ENCODE measurements at regions of chr2 and their contacts with region 1.

Region 1: DNA sequence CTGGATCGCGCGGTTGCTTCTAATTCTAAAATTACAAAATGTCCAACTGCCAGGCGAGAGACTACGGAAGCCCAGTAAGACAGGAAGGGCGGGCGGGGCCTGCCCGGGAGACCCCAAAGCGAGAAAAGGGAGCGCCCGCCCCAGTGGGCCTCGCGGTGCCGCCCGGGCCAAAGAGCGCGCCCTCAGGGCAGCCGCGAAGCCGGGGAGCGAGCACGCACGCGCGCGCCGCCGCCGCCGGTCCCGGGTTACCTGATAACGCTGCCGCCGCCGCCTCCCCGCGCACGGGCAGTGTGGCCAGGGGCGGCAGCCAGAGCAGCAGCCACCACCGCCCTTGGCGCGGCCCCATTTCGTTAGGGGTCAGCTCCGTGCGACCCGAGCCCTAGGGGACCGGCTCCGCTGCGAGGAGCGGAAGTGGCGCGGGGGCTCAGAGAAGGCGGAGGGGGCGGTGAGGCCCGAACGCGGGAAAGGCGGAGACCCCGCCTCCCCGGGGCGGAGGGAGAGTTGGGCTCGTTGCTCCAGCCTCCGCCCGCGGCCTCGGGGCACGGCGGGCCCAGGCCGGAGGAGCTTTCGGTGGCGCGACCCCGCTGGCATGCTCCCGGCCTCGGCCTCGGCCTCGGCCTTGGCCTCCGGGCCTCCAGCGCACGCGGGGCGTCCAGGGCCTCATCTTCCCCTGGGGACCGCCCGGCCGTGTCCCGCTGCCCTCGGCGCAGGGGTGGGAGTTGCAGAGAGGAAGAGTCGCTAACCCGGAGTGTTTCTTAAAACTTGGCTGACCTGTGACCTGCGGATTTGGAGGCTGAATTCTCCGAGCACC is at the start of gene NEMP2:
- DNase-seq: no peak
- ATAC-seq: peak; percentile 80
- H3K4me3 ChIP-seq: peak within 1 kb of the TSS; percentile 88
- H3K27ac ChIP-seq: peak within 1 kb of the TSS; percentile 97
- H3K4me1 ChIP-seq: peaks cover 21% of the 10 kb centered on the region
- H3K27me3 ChIP-seq: no peaks in the 10 kb centered on the region
- CTCF ChIP-seq: no peak
- EP300 ChIP-seq: no peak
- POLR2A ChIP-seq: peak; percentile 94
- RAD21 ChIP-seq: no peak
- polyA plus RNA-seq, gene NEMP2: 2.3 to 3.6 TPM

Region 2: GRCh38 chr2:189783927-189784867 is 750.3 kb before region 1 on chr2 and contains the starts of genes ORMDL1 and PMS1:
- CTCF ChIA-PET with region 1: no interaction called
- POLR2A ChIA-PET with region 1: no interaction called
- RAD21 ChIA-PET with region 1: no interaction called
- SMC1A ChIA-PET with region 1: no interaction called
- in situ Hi-C with region 1: no loop called
- intact Hi-C with region 1: loop called (anchors 5 kb)
- DNase-seq: peak; percentile 86
- ATAC-seq: peak; percentile 95
- H3K4me3 ChIP-seq: peak within 1 kb of the TSS; percentile 86
- H3K27ac ChIP-seq: peak within 1 kb of the TSS; percentile 92
- H3K4me1 ChIP-seq: peaks cover 4% of the 10 kb centered on the region; the same call in 1 of the 2 replicates
- H3K27me3 ChIP-seq: no peaks in the 10 kb centered on the region
- CTCF ChIP-seq: no peak
- EP300 ChIP-seq: 0 out of 4 replicates have a peak, but pooled peaks of 1 of the 2 experiments have one; percentile 27
- POLR2A ChIP-seq: peak; percentile 99
- RAD21 ChIP-seq: no peak
- polyA plus RNA-seq, gene ORMDL1: 68.9 to 89.5 TPM
- polyA plus RNA-seq, gene PMS1: 18.7 to 19.2 TPM

Region 3: DNA sequence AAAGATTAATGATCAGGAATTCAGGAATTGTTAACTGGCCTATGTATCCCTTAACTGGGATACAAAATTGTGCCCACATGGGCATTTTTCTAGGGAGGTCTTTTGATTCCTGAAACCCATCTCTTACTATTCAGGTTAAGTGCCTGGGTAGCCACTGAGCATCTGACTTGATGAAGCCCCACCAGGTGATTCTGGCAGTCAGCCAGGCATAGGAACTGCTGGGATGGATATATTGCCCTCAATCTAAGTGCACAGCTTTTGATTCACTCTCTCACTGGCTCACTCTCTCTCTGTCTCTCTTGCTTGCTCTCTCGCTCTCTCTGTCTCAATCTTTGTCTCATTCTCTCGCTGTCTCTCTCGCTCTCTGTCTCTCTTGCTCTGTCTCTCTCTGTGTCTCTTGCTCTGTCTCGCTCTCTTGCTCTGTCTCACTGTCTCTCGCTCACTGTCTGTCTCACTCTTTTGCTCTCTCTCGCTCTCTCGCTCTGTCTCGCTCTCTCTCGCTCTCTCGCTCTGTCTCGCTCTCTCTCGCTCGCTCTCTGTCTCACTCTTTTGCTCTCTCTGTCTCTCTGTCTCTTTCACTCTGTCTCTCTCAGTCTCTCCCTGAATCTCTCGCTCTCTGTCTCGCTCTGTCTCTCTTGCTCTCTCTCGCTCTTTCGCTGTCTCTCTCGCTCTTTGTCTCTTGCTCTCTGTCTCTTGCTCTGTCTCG is 168.9 kb before region 1 on chr2:
- CTCF ChIA-PET with region 1: no interaction called
- POLR2A ChIA-PET with region 1: no interaction called
- RAD21 ChIA-PET with region 1: no interaction called
- SMC1A ChIA-PET with region 1: no interaction called
- in situ Hi-C with region 1: no loop called
- intact Hi-C with region 1: no loop called
- DNase-seq: no peak
- ATAC-seq: no peak
- H3K4me3 ChIP-seq: no peak overlapping the region
- H3K27ac ChIP-seq: no peak overlapping the region
- H3K4me1 ChIP-seq: no peaks in the 10 kb centered on the region
- H3K27me3 ChIP-seq: no peaks in the 10 kb centered on the region
- CTCF ChIP-seq: no peak
- EP300 ChIP-seq: no peak
- POLR2A ChIP-seq: no peak
- RAD21 ChIP-seq: no peak

Region 4: GRCh38 chr2:190408538-190409271 is 125.8 kb before region 1 on chr2:
- CTCF ChIA-PET with region 1: interaction called, 5 read pairs
- POLR2A ChIA-PET with region 1: interaction called, 6 read pairs
- RAD21 ChIA-PET with region 1: no interaction called
- SMC1A ChIA-PET with region 1: interaction called, 6 read pairs
- in situ Hi-C with region 1: no loop called
- intact Hi-C with region 1: loop called (anchors 5 kb)
- DNase-seq: no peak
- ATAC-seq: peak; percentile 66
- H3K4me3 ChIP-seq: peak overlapping the region; percentile 77
- H3K27ac ChIP-seq: peak overlapping the region; percentile 83
- H3K4me1 ChIP-seq: peaks cover 4% of the 10 kb centered on the region
- H3K27me3 ChIP-seq: no peaks in the 10 kb centered on the region
- CTCF ChIP-seq: no peak
- EP300 ChIP-seq: no peak
- POLR2A ChIP-seq: peak; percentile 82
- RAD21 ChIP-seq: no peak

Region 5: GRCh38 chr2:190511104-190511503 is 23.4 kb before region 1 on chr2:
- CTCF ChIA-PET with region 1: interaction called, 6 read pairs
- POLR2A ChIA-PET with region 1: interaction called, 10 read pairs
- RAD21 ChIA-PET with region 1: interaction called, 36 read pairs
- SMC1A ChIA-PET with region 1: interaction called, 36 read pairs
- in situ Hi-C with region 1: no loop called
- intact Hi-C with region 1: no loop called
- DNase-seq: no peak
- ATAC-seq: peak; percentile 31; the same call in 1 of the 3 replicates
- H3K4me3 ChIP-seq: no peak overlapping the region
- H3K27ac ChIP-seq: no peak overlapping the region
- H3K4me1 ChIP-seq: peaks cover 4% of the 10 kb centered on the region
- H3K27me3 ChIP-seq: no peaks in the 10 kb centered on the region
- CTCF ChIP-seq: peak; percentile 21 to 49 (median 27); a peak in 4 of 6 replicates
- EP300 ChIP-seq: no peak
- POLR2A ChIP-seq: no peak
- RAD21 ChIP-seq: peak; percentile 76

Region 6: GRCh38 chr2:190545555-190546385 is 11.3 kb after region 1 on chr2:
- CTCF ChIA-PET with region 1: interaction called, 11 read pairs
- POLR2A ChIA-PET with region 1: interaction called, 4 read pairs
- RAD21 ChIA-PET with region 1: interaction called, 4 read pairs
- SMC1A ChIA-PET with region 1: interaction called, 5 read pairs
- in situ Hi-C with region 1: no loop called
- intact Hi-C with region 1: no loop called
- DNase-seq: no peak
- ATAC-seq: no peak
- H3K4me3 ChIP-seq: no peak overlapping the region
- H3K27ac ChIP-seq: no peak overlapping the region
- H3K4me1 ChIP-seq: no peaks in the 10 kb centered on the region
- H3K27me3 ChIP-seq: no peaks in the 10 kb centered on the region
- CTCF ChIP-seq: no peak
- EP300 ChIP-seq: no peak
- POLR2A ChIP-seq: no peak
- RAD21 ChIP-seq: no peak

Measured in GM12878 (cell line).